CD4-positive, alpha-beta T cell (primary cell): ENCODE measurements at regions of chr3 and their contacts with region 1.

Region 1: GRCh38 chr3:128607710-128608048 is 42.9 kb downstream of the RPN1 start:
- DNase-seq: no peak
- ATAC-seq: no peak
- H3K4me3 ChIP-seq: peak overlapping the region; percentile 62
- H3K4me3 Mint-ChIP-seq: no peak overlapping the region
- H3K27ac ChIP-seq: no peak overlapping the region
- H3K27ac Mint-ChIP-seq: no peak overlapping the region
- H3K4me1 ChIP-seq: peaks cover 12% of the 10 kb centered on the region
- H3K4me1 Mint-ChIP-seq: no peaks in the 10 kb centered on the region
- H3K27me3 ChIP-seq: peaks cover 5 to 10% of the 10 kb centered on the region in 2 experiments
- H3K27me3 Mint-ChIP-seq: no peaks in the 10 kb centered on the region
- CTCF ChIP-seq: no peak

Region 2: GRCh38 chr3:128307029-128307633 is 300.5 kb before region 1 on chr3:
- CTCF ChIA-PET with region 1: no interaction called
- POLR2A ChIA-PET with region 1: no interaction called
- intact Hi-C with region 1: loop called in 1 of 2 experiments (anchors 5 kb)
- DNase-seq: peak in 3 of 14 experiments; percentile 28 to 44 (median 41)
- ATAC-seq: no peak
- H3K4me3 ChIP-seq: no peak overlapping the region
- H3K4me3 Mint-ChIP-seq: no peak overlapping the region
- H3K27ac ChIP-seq: no peak overlapping the region
- H3K27ac Mint-ChIP-seq: no peak overlapping the region
- H3K4me1 ChIP-seq: peaks cover 14% of the 10 kb centered on the region
- H3K4me1 Mint-ChIP-seq: peaks cover 39% of the 10 kb centered on the region
- H3K27me3 ChIP-seq: no peaks in the 10 kb centered on the region
- H3K27me3 Mint-ChIP-seq: no peaks in the 10 kb centered on the region
- CTCF ChIP-seq: no peak

Region 3: DNA sequence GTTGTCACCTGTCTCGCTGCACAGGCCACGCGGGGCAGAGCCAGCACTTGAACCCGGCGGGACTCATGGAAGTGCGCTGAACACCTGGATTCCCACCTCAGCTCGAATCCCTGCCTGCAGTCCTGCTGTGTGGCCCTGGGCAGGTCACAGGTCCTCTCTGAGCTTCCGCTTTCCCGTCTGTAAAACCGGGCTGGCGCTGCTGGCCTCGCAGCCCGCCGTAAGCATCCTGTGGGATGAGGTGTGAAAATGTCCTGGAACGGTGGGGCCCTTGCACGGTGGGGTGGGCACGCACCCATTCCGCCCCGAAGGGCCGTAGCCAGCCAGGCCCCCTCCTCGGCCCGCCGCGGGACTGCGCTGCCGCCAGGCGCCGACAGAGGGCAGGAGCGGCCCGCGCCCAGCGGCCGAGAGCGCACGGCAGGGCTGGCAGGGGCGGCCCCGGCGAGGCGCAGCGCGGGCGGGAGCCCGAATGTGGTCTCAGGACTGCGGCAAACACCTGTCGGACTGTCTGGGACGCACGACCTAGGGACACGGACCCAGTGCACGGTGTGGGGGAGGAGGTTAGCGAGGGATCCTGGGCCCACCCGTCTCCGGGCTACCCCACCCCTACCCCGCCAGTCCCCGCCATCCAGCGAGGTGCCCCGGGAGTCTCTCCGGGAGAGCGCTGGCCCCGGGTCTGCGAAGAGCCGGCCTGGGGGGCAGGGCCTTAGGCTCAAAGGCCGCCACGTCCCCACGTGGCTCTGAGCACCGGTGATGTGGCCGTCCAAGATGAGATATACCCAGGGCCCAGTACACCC is 181.4 kb before region 1 on chr3:
- CTCF ChIA-PET with region 1: interaction called, 3 read pairs
- POLR2A ChIA-PET with region 1: no interaction called
- intact Hi-C with region 1: loop called (anchors 1 kb)
- DNase-seq: peak; percentile 19 to 80 (median 46)
- ATAC-seq: peak; percentile 96
- H3K4me3 ChIP-seq: peak overlapping the region; percentile 25
- H3K4me3 Mint-ChIP-seq: no peak overlapping the region
- H3K27ac ChIP-seq: no peak overlapping the region
- H3K27ac Mint-ChIP-seq: no peak overlapping the region
- H3K4me1 ChIP-seq: peaks cover 9% of the 10 kb centered on the region
- H3K4me1 Mint-ChIP-seq: no peaks in the 10 kb centered on the region
- H3K27me3 ChIP-seq: peaks cover 7 to 18% of the 10 kb centered on the region in 2 experiments
- H3K27me3 Mint-ChIP-seq: peaks cover 32% of the 10 kb centered on the region
- CTCF ChIP-seq: peak; percentile 66